ENCODE measurements at regions of chr1 and their contacts with region 1.

Region 1: GRCh38 chr1:41416552-41417334 is 55.5 kb downstream of the FOXO6 start:
- DNase-seq: peak; percentile 77
- ATAC-seq: peak; percentile 65

Region 2: DNA sequence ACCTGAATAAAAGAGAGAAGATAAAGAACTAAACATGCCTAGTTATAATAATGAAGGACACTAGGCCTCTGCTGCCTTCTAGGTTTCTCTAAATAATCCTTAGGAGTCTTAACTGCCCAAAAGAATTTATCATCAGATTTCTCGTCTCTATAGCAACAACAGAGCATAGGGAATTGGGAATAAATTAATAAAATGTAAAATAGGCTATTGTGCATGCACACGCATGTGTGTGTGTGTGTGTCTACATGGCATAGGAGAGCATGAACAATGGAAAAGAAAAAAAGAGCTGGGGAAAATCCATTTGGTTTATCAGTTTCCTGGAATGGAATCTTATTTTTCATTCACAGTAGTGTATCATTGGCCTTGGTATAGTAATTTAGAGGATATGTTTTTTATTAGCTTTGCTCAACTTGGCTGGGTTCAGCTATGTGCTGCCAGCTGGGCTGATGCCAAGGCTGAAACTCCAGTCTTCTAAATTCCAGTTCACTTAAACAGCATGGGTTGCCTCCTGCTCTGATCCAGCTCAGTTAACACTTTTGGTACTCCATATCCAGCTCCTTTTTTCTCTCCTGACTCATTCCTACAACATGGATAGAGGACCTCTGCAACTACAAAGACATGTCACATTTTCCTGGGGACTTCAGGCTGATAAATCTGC is 314.7 kb before region 1 on chr1:
- intact Hi-C with region 1: no loop called
- DNase-seq: peak; percentile 92
- ATAC-seq: peak; percentile 92

Region 3: GRCh38 chr1:41268154-41268770 is 148.5 kb before region 1 on chr1:
- intact Hi-C with region 1: loop called (anchors 5 kb)
- DNase-seq: peak; percentile 80
- ATAC-seq: peak; percentile 85

Region 4: DNA sequence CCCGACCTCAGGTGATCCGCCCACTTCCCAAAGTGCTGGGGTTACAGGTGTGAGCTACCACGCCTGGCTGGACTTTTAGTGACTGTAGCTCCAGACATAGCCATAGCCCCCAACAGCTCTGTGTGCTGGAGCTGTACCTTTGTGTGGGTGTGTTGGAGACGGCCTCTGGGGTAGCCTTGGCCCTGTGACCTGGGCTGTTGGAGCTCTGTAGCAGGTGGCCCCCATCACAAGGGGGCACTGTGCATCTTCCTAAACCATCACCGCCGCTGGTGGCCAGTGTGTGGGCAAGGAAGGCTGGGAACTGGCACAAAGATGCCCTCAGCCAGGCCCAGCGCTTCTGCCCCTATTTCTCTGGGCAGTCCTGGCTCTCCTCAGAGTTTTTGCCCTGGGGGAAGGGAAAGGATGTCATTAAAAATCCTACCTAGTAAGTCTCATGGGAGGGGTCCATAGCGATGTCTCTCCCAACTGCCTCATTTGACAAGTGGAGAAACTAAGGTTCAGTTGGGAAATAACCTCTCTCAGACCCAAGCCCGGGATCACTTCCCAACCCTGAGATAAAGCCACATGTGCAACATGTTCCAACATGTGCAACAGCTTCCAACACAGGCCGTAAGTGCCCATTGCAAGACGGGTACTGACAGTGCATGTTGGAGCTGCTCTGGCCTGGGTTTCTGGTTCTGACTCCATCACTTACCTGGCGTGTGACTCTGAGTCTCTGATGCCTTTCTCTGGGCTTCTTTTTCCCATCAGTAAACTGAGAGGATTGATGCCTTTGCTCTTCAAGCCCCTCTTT is 93.7 kb before region 1 on chr1:
- intact Hi-C with region 1: loop called (anchors 5 kb)
- DNase-seq: peak; percentile 76
- ATAC-seq: peak; percentile 74